ENCODE measurements at regions of chr1 and their contacts with region 1.

Region 1: DNA sequence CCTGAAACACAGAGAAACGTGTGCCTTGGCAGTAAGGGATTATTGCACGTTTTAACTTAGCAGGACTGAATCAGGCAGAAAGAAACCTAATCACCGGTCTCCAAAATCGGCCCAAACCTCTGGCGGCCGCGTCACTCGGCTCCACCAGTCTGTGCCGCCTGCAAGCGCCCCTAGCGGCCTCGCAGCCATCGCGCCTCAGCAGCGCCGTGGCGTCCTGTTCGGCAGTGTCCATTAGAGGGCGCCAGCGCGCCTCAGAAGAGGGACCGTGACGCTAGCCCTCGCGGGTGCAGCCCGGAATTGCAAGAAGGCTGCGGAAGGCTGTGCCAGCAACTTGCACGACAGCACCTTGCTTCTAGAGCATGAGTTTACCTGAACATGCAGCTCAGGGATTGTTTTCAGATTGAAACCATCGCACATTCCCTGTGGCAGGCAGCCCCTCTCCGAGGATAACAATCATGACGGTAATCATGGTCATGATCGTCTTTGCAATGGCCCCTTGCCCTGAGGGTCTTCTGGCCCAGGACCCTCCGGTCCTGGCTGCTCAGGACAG is 164.4 kb downstream of the TRIM33 start:
- DNase-seq: peak; percentile 96
- ATAC-seq: peak; percentile 98

Region 2: DNA sequence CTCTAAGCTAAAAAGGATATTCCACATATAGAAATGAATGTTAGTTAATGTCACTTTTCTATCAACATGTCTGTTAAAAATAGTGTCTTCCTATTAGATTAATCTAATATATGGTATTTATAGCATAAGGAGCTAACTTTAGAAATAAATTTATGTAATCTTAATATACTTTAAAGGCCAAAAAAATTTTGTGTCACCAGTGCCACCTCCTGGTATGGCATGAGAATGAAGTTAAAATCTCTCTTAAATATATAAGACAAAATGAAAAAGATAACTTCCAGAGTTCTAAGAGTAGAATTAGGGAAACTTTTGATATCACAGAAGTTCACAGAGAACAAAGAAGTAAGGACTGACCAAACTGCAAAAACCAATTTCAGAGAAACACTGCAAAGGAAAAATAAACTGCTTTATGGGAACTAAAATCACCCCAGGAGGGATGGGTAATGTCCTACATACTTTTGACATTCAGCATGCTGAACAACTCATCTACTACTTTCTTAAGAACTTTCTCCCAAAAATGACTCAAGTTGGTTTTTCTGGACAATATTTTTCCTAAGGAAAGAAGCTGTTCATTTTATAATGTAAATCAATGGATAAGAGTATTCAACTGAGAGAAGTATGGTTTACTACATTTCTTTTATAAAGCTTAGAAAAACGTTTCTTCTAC is 81.7 kb after region 1 on chr1:
- intact Hi-C with region 1: loop called in 1 of 2 experiments (anchors 5 kb)
- DNase-seq: no peak
- ATAC-seq: no peak